ENCODE measurements at regions of chr20 and their contacts with region 1.

Region 1: DNA sequence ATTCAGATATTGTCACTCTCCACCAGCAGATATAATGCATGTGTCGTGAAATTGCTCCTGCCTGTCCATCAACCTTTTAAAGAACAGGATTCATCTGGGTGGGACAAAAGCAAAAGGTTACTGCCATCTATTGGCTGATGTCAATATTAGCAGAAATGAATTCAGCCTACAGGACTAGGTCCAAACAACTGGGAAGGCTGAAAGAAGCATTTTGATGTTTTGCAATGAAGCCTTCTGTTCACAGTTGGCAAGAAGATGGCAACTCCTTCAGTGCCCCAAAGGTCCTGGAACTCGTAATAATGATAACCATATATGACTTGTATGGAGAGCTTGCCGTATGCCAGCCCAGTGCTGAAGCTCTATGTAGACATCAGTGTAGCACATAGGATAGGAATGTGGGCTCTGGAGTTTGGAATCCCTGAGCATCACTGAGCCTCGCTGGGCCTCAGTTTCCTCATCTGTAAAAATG is 7.5 kb downstream of the BCAS1 start:
- DNase-seq: peak in 2 of 4 experiments; percentile 59 to 62
- ATAC-seq: peak; percentile 76
- H3K4me3 ChIP-seq: no peak overlapping the region
- H3K27ac ChIP-seq: no peak overlapping the region
- H3K4me1 ChIP-seq: peaks cover 16 to 25% of the 10 kb centered on the region in 2 experiments; a peak in 4 of 5 replicates
- H3K27me3 ChIP-seq: no peaks in the 10 kb centered on the region
- CTCF ChIP-seq: peak; percentile 60 to 85 (median 75)
- EP300 ChIP-seq: no peak
- POLR2A ChIP-seq: no peak
- RAD21 ChIP-seq: peak; percentile 82 to 85

Region 2: DNA sequence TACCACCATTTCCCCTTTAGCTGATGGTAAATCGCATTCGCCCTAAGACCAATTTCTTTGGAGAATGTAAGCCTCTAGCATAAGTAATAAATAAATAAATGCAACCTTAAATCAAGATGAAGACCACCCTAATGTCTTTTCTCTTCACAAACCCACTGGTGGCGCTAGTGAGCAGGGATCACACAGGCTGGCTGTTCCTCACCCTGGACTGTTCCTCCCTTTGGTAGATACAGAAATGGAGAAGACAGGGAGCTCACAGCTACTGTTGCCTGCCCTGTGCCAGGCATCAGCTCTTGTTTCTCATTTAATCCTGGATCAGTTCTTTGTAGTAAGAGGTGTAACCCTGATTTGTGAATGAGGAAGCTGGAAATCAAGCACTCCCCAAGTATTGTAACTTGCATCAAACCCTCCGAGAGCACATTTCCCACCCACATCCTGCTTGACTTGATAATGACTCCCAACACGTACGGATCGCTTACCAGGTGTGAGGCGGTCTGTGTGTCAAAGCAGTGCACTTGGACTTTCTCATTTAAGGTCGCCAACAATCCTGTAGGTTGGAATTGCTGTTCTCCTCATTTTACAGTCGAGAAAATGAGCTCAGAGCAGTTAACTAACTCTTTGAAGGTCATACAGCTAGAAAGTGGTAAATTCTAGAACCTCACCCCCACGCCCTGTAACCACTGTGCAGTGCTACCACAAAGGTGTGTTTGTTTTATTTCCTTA is 854.6 kb before region 1 on chr20:
- CTCF ChIA-PET with region 1: no interaction called
- POLR2A ChIA-PET with region 1: no interaction called
- in situ Hi-C with region 1: no loop called
- intact Hi-C with region 1: loop called (anchors 10 kb)
- DNase-seq: peak; percentile 20 to 48 (median 32)
- ATAC-seq: peak; percentile 83
- H3K4me3 ChIP-seq: no peak overlapping the region
- H3K27ac ChIP-seq: no peak overlapping the region
- H3K4me1 ChIP-seq: peaks cover 0 to 2% of the 10 kb centered on the region in 2 experiments; a peak in 2 of 5 replicates
- H3K27me3 ChIP-seq: peaks cover 0 to 6% of the 10 kb centered on the region in 2 experiments; a peak in 1 of 5 replicates
- CTCF ChIP-seq: peak; percentile 62 to 68 (median 63)
- EP300 ChIP-seq: no peak
- POLR2A ChIP-seq: no peak
- RAD21 ChIP-seq: peak in 1 of 2 experiments; percentile 51; a peak in 2 of 4 replicates

Region 3: GRCh38 chr20:53425941-53426340 is 636.9 kb before region 1 on chr20:
- CTCF ChIA-PET with region 1: no interaction called
- POLR2A ChIA-PET with region 1: no interaction called
- in situ Hi-C with region 1: no loop called
- intact Hi-C with region 1: loop called (anchors 10 kb)
- DNase-seq: no peak
- ATAC-seq: no peak
- H3K4me3 ChIP-seq: no peak overlapping the region
- H3K27ac ChIP-seq: no peak overlapping the region
- H3K4me1 ChIP-seq: peaks cover 0 to 4% of the 10 kb centered on the region in 2 experiments; a peak in 1 of 5 replicates
- H3K27me3 ChIP-seq: peaks cover 5 to 16% of the 10 kb centered on the region in 2 experiments; a peak in 3 of 5 replicates
- CTCF ChIP-seq: no peak
- EP300 ChIP-seq: no peak
- POLR2A ChIP-seq: no peak
- RAD21 ChIP-seq: no peak

Region 4: GRCh38 chr20:53957451-53958172 is 105.2 kb before region 1 on chr20:
- CTCF ChIA-PET with region 1: no interaction called
- POLR2A ChIA-PET with region 1: no interaction called
- in situ Hi-C with region 1: no loop called
- intact Hi-C with region 1: loop called (anchors 2 kb)
- DNase-seq: no peak
- ATAC-seq: peak; percentile 74
- H3K4me3 ChIP-seq: no peak overlapping the region
- H3K27ac ChIP-seq: no peak overlapping the region
- H3K4me1 ChIP-seq: no peaks in the 10 kb centered on the region
- H3K27me3 ChIP-seq: peaks cover 5 to 18% of the 10 kb centered on the region in 2 experiments; a peak in 3 of 5 replicates
- CTCF ChIP-seq: peak; percentile 7 to 38 (median 11); a peak in 3 of 6 replicates
- EP300 ChIP-seq: no peak
- POLR2A ChIP-seq: no peak
- RAD21 ChIP-seq: peak in 1 of 2 experiments; percentile 23; a peak in 1 of 4 replicates

Region 5: GRCh38 chr20:54107600-54108416 is 45.0 kb after region 1 on chr20:
- CTCF ChIA-PET with region 1: no interaction called
- POLR2A ChIA-PET with region 1: no interaction called
- in situ Hi-C with region 1: no loop called
- intact Hi-C with region 1: no loop called
- DNase-seq: no peak
- ATAC-seq: peak; percentile 33; the same call in 2 of the 3 replicates
- H3K4me3 ChIP-seq: no peak overlapping the region
- H3K27ac ChIP-seq: no peak overlapping the region; the same call in 2 of the 3 replicates
- H3K4me1 ChIP-seq: no peaks in the 10 kb centered on the region; a peak in 1 of 5 replicates
- H3K27me3 ChIP-seq: no peaks in the 10 kb centered on the region
- CTCF ChIP-seq: no peak
- EP300 ChIP-seq: no peak
- POLR2A ChIP-seq: no peak
- RAD21 ChIP-seq: no peak

Region 6: GRCh38 chr20:54123587-54124180 is 60.8 kb after region 1 on chr20:
- CTCF ChIA-PET with region 1: no interaction called
- POLR2A ChIA-PET with region 1: no interaction called
- in situ Hi-C with region 1: no loop called
- intact Hi-C with region 1: no loop called
- DNase-seq: no peak
- ATAC-seq: no peak; the same call in 1 of the 3 replicates
- H3K4me3 ChIP-seq: no peak overlapping the region
- H3K27ac ChIP-seq: no peak overlapping the region
- H3K4me1 ChIP-seq: no peaks in the 10 kb centered on the region; a peak in 1 of 5 replicates
- H3K27me3 ChIP-seq: peaks cover 3 to 5% of the 10 kb centered on the region in 2 experiments; a peak in 2 of 5 replicates
- CTCF ChIP-seq: no peak
- EP300 ChIP-seq: no peak
- POLR2A ChIP-seq: no peak
- RAD21 ChIP-seq: no peak